H1 (cell line): ENCODE measurements at regions of chr7 and their contacts with region 1.

Region 1: DNA sequence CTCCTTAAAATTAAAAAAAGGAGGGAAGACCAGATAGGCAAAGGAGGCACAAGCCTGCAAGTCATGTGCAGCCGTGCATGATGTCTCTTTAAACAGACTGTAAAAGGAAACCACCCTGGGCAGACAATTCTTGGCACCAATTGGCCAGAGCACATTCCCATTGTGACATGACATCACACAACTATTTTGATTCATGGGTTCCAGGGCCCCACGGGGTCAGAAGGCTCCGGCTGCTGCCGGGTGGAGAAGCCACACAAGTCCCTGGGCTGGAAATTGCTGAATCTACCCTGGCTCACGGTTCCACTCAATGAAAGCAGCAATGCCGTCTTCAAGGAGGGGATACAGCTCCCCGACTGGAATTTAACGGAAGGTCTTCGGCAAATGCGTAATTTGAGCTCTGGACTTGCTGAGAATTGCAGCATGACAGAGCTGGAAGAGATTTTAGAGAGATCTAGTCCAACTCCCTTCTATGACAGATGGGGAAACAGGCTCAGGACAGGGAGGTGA is 140.5 kb downstream of the PRKAG2 start:
- DNase-seq: peak; percentile 44 to 58
- H3K4me3 ChIP-seq: no peak overlapping the region
- H3K27ac ChIP-seq: no peak overlapping the region
- H3K4me1 ChIP-seq: peaks cover 10 to 25% (median 11%) of the 10 kb centered on the region in 4 experiments
- H3K27me3 ChIP-seq: no peaks in the 10 kb centered on the region; a peak in 1 of 7 replicates
- CTCF ChIP-seq: peak; percentile 30 to 62 (median 55)
- EP300 ChIP-seq: no peak
- POLR2A ChIP-seq: no peak
- RAD21 ChIP-seq: peak; percentile 40 to 59; a peak in 3 of 4 replicates

Region 2: GRCh38 chr7:151616443-151617213 is 119.8 kb before region 1 on chr7:
- CTCF ChIA-PET with region 1: interaction called, 10 read pairs
- POLR2A ChIA-PET with region 1: no interaction called
- DNase-seq: no peak
- H3K4me3 ChIP-seq: no peak overlapping the region
- H3K27ac ChIP-seq: no peak overlapping the region
- H3K4me1 ChIP-seq: no peaks in the 10 kb centered on the region
- H3K27me3 ChIP-seq: no peaks in the 10 kb centered on the region
- CTCF ChIP-seq: no peak
- EP300 ChIP-seq: no peak
- POLR2A ChIP-seq: no peak
- RAD21 ChIP-seq: no peak

Region 3: DNA sequence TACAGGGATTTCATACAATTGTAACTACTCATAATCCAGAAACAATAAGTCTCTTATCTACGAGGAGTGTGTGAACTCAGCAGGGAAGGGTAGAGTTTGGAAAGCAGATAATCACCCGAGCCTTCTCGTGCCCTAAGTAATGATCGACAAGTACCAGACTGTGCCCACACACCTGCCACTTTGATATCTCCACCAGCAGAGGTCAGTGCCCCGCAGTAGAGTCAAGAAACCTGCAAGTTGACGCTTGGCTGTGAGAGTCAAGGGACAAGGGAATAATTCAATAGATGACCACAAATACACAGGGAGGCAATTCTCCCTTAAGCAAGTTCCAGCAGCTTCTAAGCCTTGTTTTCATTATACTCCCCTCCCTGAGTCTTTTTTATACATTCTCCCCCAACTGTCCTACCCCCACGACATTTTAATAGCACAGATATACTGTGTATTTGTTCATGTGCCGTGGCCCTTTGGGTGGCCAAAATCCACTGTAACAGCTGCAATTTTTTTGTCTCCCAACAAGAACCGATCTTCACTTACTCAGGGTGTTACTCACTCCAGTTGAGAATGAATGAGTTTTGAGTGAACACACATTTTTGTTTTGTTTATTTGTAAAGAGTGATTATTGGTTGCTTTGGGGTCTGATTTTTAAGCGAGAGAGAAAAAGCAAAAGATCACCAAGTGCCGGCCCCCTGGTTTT is 109.9 kb before region 1 on chr7:
- CTCF ChIA-PET with region 1: interaction called, 10 read pairs
- POLR2A ChIA-PET with region 1: no interaction called
- DNase-seq: peak in 1 of 2 experiments; percentile 48
- H3K4me3 ChIP-seq: no peak overlapping the region
- H3K27ac ChIP-seq: no peak overlapping the region
- H3K4me1 ChIP-seq: peaks cover 2 to 17% (median 11%) of the 10 kb centered on the region in 4 experiments
- H3K27me3 ChIP-seq: peaks cover 0 to 21% (median 13%) of the 10 kb centered on the region in 4 experiments; a peak in 3 of 7 replicates
- CTCF ChIP-seq: peak; percentile 76 to 89 (median 79)
- EP300 ChIP-seq: no peak
- POLR2A ChIP-seq: no peak
- RAD21 ChIP-seq: peak; percentile 80 to 87

Region 4: DNA sequence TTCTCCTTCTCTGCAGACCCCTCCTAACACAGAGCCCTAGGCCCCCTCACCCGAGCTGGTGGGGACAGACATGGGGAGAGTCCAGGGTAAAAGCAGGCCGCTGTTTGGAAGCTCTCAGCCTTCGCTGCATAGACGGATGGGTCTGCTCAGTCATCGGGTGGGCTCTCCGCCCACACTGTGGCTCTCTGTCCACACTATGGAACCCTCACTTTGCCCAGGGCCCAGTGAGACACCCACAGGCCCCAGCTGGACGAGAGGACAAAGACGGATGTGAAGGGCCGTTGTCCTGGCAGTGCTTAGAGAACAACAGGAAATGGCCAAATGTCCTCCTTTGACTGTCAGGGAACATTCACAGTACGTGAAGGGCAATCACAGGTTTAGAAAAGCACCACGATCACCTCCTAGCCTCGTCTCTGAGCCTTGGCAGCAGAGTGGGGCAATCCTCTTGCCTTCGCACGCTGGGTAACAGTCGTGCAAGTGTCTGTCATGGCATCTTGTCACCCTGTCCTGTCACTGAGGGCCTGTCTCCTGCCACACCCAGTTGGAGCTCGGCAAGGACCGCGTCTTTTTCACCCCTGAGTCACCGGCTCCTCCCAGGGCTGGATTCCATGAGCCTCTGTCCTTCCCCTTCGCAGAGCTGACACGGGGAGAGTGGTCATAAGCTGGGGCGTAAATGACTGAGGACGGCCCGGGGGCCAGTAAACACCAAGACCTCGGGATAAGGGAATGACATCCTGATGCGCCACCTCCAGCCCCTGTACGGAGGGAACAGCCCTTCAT is 59.8 kb after region 1 on chr7:
- CTCF ChIA-PET with region 1: no interaction called
- POLR2A ChIA-PET with region 1: no interaction called
- DNase-seq: no peak
- H3K4me3 ChIP-seq: no peak overlapping the region
- H3K27ac ChIP-seq: no peak overlapping the region
- H3K4me1 ChIP-seq: peaks cover 0 to 10% (median 6%) of the 10 kb centered on the region in 4 experiments; a peak in 3 of 7 replicates
- H3K27me3 ChIP-seq: no peaks in the 10 kb centered on the region
- CTCF ChIP-seq: no peak
- EP300 ChIP-seq: no peak
- POLR2A ChIP-seq: no peak
- RAD21 ChIP-seq: no peak